ENCODE measurements at regions of chr9 and their contacts with region 1.

Region 1: DNA sequence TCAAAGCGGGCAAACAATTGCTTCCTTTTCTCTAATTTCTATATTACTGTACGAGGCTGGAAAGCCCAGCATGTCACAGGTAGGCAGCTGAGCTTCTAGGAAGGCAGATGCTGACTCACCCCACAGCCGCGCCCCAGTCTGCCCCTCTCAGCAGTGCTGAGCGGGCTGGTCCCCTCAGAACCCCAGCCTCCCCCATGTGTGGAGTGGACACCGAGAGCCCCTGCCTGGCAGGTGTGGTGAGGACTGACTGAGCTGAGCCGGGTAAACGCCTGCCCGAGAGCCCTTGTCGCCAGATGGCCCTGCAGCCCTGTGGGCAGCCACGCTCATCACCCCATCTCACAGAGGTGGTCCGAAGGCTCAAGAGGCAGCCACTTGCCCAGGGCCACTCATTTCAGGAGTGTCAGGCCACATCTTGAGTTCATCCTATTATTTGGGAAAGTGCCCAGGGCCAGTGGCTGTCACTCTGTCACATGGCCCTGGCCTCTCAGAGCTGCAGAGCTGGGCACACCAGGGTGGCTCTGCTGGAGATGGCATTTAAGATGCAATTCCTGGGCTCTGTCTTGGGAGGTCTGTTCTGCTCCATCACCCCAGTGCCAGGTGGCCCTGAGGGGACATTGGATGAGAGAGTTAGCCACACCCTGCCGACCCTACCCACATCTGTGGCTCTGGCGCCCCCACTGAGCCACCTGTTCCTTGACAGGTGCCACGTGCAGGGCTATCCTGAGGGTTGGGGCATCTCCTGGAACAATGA is 12.4 kb downstream of the CARD19 start:
- DNase-seq: peak; percentile 68
- H3K4me3 Mint-ChIP-seq: peak overlapping the region; percentile 32
- H3K27ac Mint-ChIP-seq: peak overlapping the region; percentile 61
- H3K4me1 Mint-ChIP-seq: peaks cover 65% of the 10 kb centered on the region
- H3K27me3 Mint-ChIP-seq: no peaks in the 10 kb centered on the region

Region 2: DNA sequence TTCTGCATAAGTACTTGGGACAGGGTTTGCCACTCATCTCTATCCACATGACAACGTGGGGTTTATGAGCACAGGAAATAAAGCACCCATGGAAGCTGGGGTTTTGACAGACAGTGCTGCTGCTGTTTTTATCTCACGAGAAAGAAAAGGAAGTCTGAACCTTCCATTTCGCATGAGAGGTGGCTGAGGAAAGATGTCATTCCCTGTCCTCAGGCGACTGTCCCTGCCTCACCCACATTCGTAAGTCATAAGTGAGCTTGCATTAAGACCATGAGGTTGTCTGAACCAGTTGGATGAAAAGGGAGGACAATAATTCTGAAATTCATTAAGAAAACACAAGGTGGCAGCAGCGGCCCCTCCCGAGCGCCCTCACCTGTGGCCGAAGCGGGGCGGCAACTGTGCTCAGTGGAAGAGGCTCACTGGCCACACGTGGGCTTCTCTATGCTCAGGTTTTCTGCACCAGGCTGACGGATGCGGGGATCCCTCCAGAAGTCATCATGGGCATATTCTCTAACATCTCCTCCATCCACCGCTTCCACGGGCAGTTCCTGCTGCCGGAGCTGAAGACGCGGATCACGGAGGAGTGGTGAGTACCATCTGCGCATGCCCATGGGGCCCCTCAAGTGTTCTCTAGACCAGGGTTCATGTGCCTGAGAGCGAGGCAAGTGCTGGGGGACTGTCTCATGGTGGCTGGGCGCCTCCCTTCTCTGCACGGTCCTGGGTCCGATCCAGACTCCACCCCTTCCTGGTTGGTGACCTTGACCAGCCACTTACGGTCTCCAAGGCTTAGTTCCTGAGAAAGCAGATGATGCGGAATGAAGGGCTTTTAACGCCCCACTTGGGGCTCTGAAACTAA is 104.7 kb before region 1 on chr9:
- CTCF ChIA-PET with region 1: interaction called, 47 read pairs
- POLR2A ChIA-PET with region 1: no interaction called
- DNase-seq: peak; percentile 68
- H3K4me3 Mint-ChIP-seq: no peak overlapping the region
- H3K27ac Mint-ChIP-seq: peak overlapping the region; percentile 78
- H3K4me1 Mint-ChIP-seq: peaks cover 46% of the 10 kb centered on the region
- H3K27me3 Mint-ChIP-seq: no peaks in the 10 kb centered on the region

Region 3: DNA sequence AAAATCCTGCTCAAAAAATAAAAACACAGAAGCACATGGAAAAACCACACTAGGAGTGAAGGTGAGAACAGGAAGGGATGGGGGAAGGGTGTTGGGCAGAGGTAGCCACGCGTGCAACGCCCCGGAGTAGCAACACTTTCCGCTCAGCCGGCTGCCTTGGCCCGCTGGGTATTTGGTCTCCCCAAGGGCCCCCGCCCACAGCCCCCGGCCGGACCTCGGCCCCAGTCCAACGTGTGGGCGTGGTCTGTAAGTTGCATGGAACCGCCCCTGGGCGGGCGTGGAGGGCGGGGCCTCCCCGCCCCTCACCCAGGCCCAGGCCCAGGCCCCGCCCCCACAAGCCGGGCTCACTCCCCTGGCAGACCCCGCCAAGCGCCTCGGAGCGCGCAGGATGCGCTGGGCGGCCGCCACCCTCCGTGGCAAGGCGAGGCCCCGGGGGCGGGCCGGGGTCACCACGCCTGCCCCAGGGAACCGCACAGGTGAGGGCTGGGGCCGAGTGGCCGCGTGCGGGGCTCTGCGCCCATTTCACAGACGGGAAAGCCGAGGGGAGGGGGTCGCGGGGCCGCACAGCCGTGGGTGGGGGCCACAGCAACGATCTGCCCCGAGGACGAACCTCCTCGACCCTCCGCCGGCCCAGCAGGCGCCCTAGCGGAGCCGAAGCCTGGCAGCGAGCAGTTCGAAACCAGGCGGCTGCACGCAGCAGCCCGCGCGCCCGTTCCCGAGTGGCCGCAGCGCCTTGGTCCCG is 49.9 kb before region 1 on chr9 and contains the start of gene SUSD3:
- CTCF ChIA-PET with region 1: interaction called, 16 read pairs
- POLR2A ChIA-PET with region 1: interaction called, 13 read pairs
- DNase-seq: peak; percentile 77
- H3K4me3 Mint-ChIP-seq: peak within 1 kb of the TSS; percentile 92
- H3K27ac Mint-ChIP-seq: peak within 1 kb of the TSS; percentile 83
- H3K4me1 Mint-ChIP-seq: peaks cover 63% of the 10 kb centered on the region
- H3K27me3 Mint-ChIP-seq: no peaks in the 10 kb centered on the region
- total RNA-seq, gene SUSD3: 69.6 to 71.4 TPM

Region 4: DNA sequence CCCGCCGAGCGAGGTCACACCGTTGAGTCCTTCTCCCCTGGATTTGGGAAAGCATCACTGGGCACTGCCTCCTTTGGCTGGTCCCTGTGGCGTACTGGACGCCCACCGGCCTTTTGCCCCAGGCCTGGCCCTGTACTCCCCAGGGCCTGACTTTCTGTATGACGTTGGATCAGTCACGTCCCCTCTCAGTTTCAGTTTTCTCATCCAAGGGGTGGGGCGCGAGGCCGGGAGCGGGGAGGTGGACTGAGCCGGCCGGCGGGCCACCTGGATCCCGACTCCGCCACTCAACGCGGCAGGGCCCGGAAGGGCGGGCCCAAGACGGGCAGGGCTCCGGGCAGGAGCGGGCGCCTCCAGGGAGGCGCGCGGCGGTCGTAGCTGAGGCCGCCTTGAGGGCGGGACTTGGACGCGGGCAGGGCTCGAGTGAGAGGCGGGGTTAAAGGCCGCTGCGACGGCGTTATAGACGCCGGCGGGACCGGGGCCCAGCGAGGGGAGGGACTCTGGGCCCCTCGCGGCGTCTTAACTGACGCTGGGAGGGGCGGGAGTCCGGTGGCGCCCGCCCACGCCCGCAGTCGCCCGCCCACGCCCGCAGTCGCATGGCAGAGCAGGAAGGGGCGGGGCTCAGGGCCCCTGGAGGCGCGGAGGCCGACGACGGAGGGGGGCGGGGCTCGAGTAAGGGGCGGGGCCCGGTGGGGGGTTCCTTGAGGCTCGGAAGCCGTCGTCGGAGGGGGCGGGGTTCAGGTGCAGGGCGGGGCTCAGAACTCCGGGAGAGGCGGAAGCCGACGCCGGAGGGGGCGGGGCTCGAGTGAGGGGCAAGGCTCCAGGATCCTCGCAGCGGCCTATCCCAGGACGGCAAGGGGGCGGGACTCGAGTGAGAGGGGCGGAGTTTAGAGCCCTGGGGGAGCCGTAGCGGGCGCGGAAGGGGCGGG is 13.0 kb before region 1 on chr9:
- CTCF ChIA-PET with region 1: interaction called, 55 read pairs
- POLR2A ChIA-PET with region 1: interaction called, 38 read pairs
- DNase-seq: peak; percentile 100
- H3K4me3 Mint-ChIP-seq: peak overlapping the region; percentile 76
- H3K27ac Mint-ChIP-seq: peak overlapping the region; percentile 96
- H3K4me1 Mint-ChIP-seq: peaks cover 78% of the 10 kb centered on the region
- H3K27me3 Mint-ChIP-seq: no peaks in the 10 kb centered on the region

Region 5: DNA sequence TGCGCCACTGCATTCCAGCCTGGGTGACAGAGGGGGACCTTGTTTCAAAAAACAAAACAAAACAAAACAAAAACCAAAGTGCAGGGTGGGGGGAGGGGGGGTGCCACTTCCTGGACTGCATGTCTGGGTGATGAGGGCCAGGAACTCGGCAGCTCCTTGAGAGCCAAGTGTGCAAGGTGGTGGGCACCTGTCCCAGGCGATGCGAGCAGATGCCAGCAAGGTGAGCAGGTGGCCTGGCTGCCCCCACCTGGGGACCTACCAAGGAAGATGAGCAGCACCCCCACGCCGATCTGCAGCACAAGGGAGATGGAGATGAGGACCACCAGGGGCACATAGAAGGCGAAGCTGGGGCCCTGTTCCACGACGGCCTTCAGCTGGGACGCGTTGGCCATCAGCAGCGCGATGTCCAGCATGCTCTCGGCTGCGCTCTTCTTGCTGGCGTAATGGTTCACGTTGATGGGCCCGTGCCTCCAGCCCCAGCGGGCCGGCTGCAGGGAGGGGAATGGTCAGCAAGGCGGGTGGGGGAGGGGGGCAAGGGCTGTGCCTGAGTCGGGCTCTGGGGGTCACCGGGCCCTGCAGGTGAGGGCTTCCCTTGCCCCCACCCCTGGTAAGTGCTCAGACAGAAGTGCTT is 17.8 kb after region 1 on chr9:
- CTCF ChIA-PET with region 1: interaction called, 15 read pairs
- POLR2A ChIA-PET with region 1: interaction called, 5 read pairs
- DNase-seq: no peak
- H3K4me3 Mint-ChIP-seq: no peak overlapping the region
- H3K27ac Mint-ChIP-seq: peak overlapping the region; percentile 77
- H3K4me1 Mint-ChIP-seq: peaks cover 40% of the 10 kb centered on the region
- H3K27me3 Mint-ChIP-seq: no peaks in the 10 kb centered on the region

Region 6: DNA sequence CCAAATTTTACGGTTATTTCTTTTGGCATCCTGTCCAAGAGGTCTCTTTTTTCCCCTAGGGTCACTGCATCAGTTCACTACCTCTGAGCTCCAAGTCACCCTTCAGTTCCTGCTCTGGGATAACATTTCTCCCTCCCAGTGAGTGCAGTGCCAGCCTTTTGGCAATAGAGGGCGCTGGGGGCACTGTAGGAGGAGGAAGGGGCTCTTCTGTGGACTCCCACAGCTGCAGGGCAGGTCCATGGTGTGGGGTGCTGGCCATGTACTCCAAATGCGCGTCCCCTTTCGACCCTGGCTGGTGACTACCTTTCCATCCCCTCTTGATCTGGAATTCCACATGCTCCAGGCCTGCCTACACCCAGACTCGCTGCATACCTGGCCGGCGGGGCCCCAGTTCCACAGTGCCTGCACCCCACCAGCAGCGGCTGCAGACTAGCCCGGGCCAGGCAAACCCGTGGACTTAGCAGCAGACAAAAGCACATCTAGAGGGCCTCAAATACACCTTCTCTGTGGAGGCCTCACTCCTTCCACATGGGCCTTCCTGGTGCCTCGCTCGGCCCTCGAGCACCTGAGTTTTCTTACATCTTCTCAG is 45.9 kb after region 1 on chr9:
- CTCF ChIA-PET with region 1: interaction called, 17 read pairs
- POLR2A ChIA-PET with region 1: interaction called, 5 read pairs
- DNase-seq: peak; percentile 42
- H3K4me3 Mint-ChIP-seq: no peak overlapping the region
- H3K27ac Mint-ChIP-seq: no peak overlapping the region
- H3K4me1 Mint-ChIP-seq: peaks cover 37% of the 10 kb centered on the region
- H3K27me3 Mint-ChIP-seq: no peaks in the 10 kb centered on the region

Measured in activated CD4-positive, alpha-beta memory T cell treated with anti-CD3 and anti-CD28 coated beads, Interleukin-2, amount 10 ng/mL, durations not matched to agents 7 days and 5 days (primary cell).